Panc1 (cell line): ENCODE measurements at regions of chr15 and their contacts with region 1.

Region 1: GRCh38 chr15:39580117-39580484 is 778 bp upstream of the THBS1 start:
- DNase-seq: peak; percentile 28
- ATAC-seq: peak; percentile 82
- H3K4me3 ChIP-seq: peak overlapping the region; percentile 50 to 53
- H3K27ac ChIP-seq: no peak overlapping the region
- H3K4me1 ChIP-seq: no peaks in the 10 kb centered on the region
- H3K27me3 ChIP-seq: peaks cover 4% of the 10 kb centered on the region
- CTCF ChIP-seq: peak; percentile 97

Region 2: GRCh38 chr15:38707802-38708671 is 872.1 kb before region 1 on chr15:
- CTCF ChIA-PET with region 1: interaction called, 4 read pairs
- POLR2A ChIA-PET with region 1: no interaction called
- in situ Hi-C with region 1: no loop called
- intact Hi-C with region 1: loop called (anchors 5 kb)
- DNase-seq: no peak
- ATAC-seq: peak; percentile 98
- H3K4me3 ChIP-seq: no peak overlapping the region
- H3K27ac ChIP-seq: no peak overlapping the region
- H3K4me1 ChIP-seq: no peaks in the 10 kb centered on the region
- H3K27me3 ChIP-seq: peaks cover 2% of the 10 kb centered on the region; the same call in 1 of the 2 replicates
- CTCF ChIP-seq: peak; percentile 79

Region 3: DNA sequence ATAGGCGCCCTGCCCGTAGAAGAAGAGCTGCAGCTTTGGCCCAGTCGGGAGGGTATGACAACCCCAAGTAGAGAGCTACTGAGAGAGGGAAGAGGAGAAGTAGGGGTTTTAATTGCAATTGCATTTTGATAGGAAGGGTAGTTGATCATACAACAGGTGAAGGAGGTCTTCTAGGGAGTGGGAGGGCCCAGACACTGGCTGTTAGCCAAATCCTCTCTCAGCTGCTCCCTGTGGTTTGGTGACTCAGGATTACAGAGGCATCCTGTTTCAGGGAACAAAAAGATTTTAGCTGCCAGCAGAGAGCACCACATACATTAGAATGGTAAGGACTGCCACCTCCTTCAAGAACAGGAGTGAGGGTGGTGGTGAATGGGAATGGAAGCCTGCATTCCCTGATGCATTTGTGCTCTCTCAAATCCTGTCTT is 408.1 kb before region 1 on chr15:
- CTCF ChIA-PET with region 1: interaction called, 13 read pairs
- POLR2A ChIA-PET with region 1: no interaction called
- in situ Hi-C with region 1: no loop called
- intact Hi-C with region 1: loop called (anchors 2 kb)
- DNase-seq: peak; percentile 86
- ATAC-seq: peak; percentile 99
- H3K4me3 ChIP-seq: no peak overlapping the region
- H3K27ac ChIP-seq: peak overlapping the region; percentile 59
- H3K4me1 ChIP-seq: no peaks in the 10 kb centered on the region
- H3K27me3 ChIP-seq: no peaks in the 10 kb centered on the region
- CTCF ChIP-seq: peak; percentile 57

Region 4: DNA sequence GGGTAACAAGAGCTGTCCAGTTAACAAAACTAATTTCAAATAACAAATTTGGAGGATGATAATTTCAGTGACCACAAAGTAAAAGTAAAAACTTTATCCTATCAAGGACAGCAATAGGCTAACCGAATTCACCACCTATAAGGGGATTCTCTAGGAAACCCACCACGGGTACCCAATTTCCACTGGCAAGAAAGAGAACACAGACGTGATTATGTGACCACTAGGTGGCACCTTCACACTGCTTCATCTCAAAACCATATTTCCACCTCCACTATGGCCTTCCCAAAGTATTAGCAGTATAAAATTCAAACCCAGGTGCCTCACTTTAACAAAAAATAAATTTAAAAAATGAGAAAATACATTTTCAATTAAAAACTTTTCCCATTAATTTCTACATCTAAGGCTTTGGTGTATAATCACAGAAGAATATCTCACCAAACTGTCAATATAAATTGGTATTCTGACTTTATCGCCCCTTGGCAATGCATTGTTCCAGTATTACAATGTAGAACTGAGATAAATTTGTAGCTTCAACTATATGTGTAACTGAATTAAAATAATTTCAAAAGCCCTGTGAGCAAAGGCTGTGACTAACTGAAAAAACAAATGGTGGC is 106.0 kb after region 1 on chr15:
- CTCF ChIA-PET with region 1: no interaction called
- POLR2A ChIA-PET with region 1: no interaction called
- in situ Hi-C with region 1: no loop called
- intact Hi-C with region 1: no loop called
- DNase-seq: peak; percentile 13
- ATAC-seq: peak; percentile 84
- H3K4me3 ChIP-seq: no peak overlapping the region
- H3K27ac ChIP-seq: no peak overlapping the region
- H3K4me1 ChIP-seq: no peaks in the 10 kb centered on the region
- H3K27me3 ChIP-seq: no peaks in the 10 kb centered on the region
- CTCF ChIP-seq: peak; percentile 84

Region 5: GRCh38 chr15:39699516-39700374 is 119.6 kb after region 1 on chr15:
- CTCF ChIA-PET with region 1: no interaction called
- POLR2A ChIA-PET with region 1: no interaction called
- in situ Hi-C with region 1: no loop called
- intact Hi-C with region 1: no loop called
- DNase-seq: no peak
- ATAC-seq: no peak
- H3K4me3 ChIP-seq: no peak overlapping the region
- H3K27ac ChIP-seq: no peak overlapping the region
- H3K4me1 ChIP-seq: no peaks in the 10 kb centered on the region
- H3K27me3 ChIP-seq: no peaks in the 10 kb centered on the region
- CTCF ChIP-seq: no peak